K562 (cell line): ENCODE measurements at regions of chr10 and their contacts with region 1.

Region 1: GRCh38 chr10:28587970-28588290 is 55.0 kb downstream of the WAC start:
- DNase-seq: peak in 1 of 4 experiments; percentile 17
- ATAC-seq: peak; percentile 53; the same call in 2 of the 3 replicates
- H3K4me3 ChIP-seq: no peak overlapping the region
- H3K27ac ChIP-seq: no peak overlapping the region
- H3K4me1 ChIP-seq: no peaks in the 10 kb centered on the region; a peak in 2 of 5 replicates
- H3K27me3 ChIP-seq: no peaks in the 10 kb centered on the region
- CTCF ChIP-seq: peak in 1 of 3 experiments; percentile 24; a peak in 2 of 6 replicates
- EP300 ChIP-seq: no peak
- POLR2A ChIP-seq: no peak
- RAD21 ChIP-seq: peak; percentile 29 to 33; a peak in 2 of 4 replicates

Region 2: DNA sequence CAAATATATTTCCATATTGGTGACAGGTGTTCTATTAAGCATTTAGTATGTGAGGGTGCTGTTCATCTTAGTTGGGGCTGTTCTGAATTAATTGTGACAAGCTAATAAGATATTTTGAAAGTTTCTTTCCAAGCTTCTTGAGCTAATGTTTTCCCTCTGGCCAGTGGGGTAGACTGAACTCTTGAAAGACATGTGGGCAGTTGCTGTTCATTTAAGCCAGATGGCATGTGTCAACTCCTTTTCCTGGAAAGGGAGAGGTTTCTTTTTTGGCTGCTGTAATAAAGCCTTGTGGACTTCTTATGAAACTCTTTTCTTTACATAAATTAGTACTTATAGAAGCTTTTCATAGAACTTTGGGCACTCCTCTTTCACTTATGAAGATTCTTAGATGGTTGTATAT is 1062.1 kb before region 1 on chr10:
- CTCF ChIA-PET with region 1: no interaction called
- POLR2A ChIA-PET with region 1: no interaction called
- in situ Hi-C with region 1: no loop called
- intact Hi-C with region 1: no loop called
- DNase-seq: peak in 2 of 4 experiments; percentile 31 to 50
- ATAC-seq: peak; percentile 44
- H3K4me3 ChIP-seq: no peak overlapping the region
- H3K27ac ChIP-seq: peak overlapping the region; percentile 91; the same call in 2 of the 3 replicates
- H3K4me1 ChIP-seq: peaks cover 0 to 36% of the 10 kb centered on the region in 2 experiments; a peak in 4 of 5 replicates
- H3K27me3 ChIP-seq: no peaks in the 10 kb centered on the region
- CTCF ChIP-seq: no peak
- EP300 ChIP-seq: no peak
- POLR2A ChIP-seq: no peak
- RAD21 ChIP-seq: no peak

Region 3: GRCh38 chr10:28432210-28432676 is 155.7 kb before region 1 on chr10:
- CTCF ChIA-PET with region 1: interaction called, 3 read pairs
- POLR2A ChIA-PET with region 1: no interaction called
- in situ Hi-C with region 1: no loop called
- intact Hi-C with region 1: loop called (anchors 2 kb)
- DNase-seq: peak; percentile 63 to 75 (median 71)
- ATAC-seq: peak; percentile 81
- H3K4me3 ChIP-seq: no peak overlapping the region
- H3K27ac ChIP-seq: no peak overlapping the region
- H3K4me1 ChIP-seq: peaks cover 0 to 2% of the 10 kb centered on the region in 2 experiments; a peak in 2 of 5 replicates
- H3K27me3 ChIP-seq: peaks cover 5 to 11% of the 10 kb centered on the region in 2 experiments
- CTCF ChIP-seq: peak; percentile 77 to 83 (median 83)
- EP300 ChIP-seq: no peak
- POLR2A ChIP-seq: no peak
- RAD21 ChIP-seq: peak; percentile 76 to 84